RWPE1 (cell line): ENCODE measurements at regions of chr6 and their contacts with region 1.

Region 1: GRCh38 chr6:113879186-113880096 is 22.3 kb downstream of the MARCKS start:
- DNase-seq: peak; percentile 73
- H3K27ac ChIP-seq: no peak overlapping the region
- CTCF ChIP-seq: peak; percentile 83

Region 2: DNA sequence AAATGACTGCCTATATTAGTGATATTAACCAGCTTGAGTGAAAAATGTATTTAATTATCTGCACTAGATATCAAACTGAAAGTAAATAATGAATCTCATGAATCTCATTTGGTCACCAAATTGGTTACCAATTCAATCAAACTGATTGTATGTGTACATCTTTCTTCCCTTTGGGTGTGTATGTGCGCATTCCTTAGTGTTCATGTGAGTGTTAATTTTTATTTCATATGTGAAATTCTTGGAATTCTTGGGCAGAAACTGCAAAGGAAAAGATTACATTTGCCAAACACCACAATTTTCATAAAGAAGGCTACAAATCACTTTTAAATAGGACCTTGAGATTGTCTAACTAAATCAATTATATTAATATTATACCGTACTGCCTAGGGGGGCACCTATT is 670.7 kb before region 1 on chr6:
- CTCF ChIA-PET with region 1: interaction called, 10 read pairs
- POLR2A ChIA-PET with region 1: no interaction called
- DNase-seq: no peak
- H3K27ac ChIP-seq: no peak overlapping the region
- CTCF ChIP-seq: no peak

Region 3: GRCh38 chr6:113953346-113953745 is 73.9 kb after region 1 on chr6:
- CTCF ChIA-PET with region 1: no interaction called
- POLR2A ChIA-PET with region 1: no interaction called
- DNase-seq: no peak
- H3K27ac ChIP-seq: no peak overlapping the region
- CTCF ChIP-seq: no peak